GM10248 (cell line): ENCODE measurements at regions of chr2 and their contacts with region 1.

Region 1: GRCh38 chr2:113940891-113941290 is 51.0 kb downstream of the ACTR3 start:
- DNase-seq: no peak
- CTCF ChIP-seq: no peak

Region 2: GRCh38 chr2:113959202-113959601 is 18.3 kb after region 1 on chr2:
- CTCF ChIA-PET with region 1: interaction called, 10 read pairs
- POLR2A ChIA-PET with region 1: no interaction called
- DNase-seq: no peak
- CTCF ChIP-seq: no peak